Ascending aorta (tissue), 2 donors: ENCODE measurements at regions of chr6 and their contacts with region 1.

Region 1: DNA sequence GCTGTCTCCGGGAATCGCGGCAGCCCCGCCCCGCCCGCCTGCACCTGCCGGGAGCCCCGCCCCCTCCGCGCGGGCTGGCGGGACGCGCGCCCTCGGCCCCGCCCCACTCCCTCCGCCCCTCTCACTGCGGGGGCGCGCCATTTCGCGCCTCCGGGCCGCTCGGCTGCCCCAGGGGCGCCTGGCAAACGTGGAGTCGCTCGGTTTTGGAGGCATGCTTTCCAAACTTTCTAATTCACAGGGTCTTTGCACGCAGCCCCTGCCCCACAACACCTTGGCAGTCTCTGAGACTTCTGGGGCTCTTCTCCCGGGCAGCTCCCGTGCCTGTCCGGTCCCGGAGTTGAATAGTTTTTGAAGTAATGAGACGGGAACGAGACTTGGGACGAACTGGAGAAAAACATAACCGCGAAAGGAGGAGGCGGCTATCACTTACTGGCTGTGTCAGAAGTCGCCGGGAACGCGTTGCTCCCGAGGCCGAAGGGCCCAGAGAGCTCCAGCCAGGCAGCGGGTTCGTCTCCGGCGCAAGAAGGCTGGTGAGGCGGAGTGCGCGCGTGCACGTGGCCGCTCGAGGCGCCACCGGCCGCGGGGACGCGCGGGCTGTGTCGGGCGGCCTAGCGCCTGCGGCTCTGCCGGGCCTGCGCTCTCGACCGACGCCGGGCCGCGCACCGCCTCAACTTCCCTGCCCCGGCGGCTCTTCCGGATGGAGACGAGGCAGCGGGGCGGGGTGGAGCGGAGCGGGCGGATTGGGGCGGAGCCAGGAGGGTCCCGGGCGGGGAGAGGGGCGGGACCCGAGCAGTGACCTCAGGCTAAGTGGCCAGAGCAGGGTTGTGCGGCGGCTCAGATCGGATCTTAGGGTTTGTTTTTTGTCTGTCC is at the start of gene MCM9:
- DNase-seq: peak; percentile 42 to 94
- H3K4me3 ChIP-seq: peak within 1 kb of the TSS; percentile 75 to 97
- H3K27ac ChIP-seq: peak within 1 kb of the TSS; percentile 88 to 95
- H3K4me1 ChIP-seq: peaks cover 0 to 3% of the 10 kb centered on the region in 2 donors
- H3K27me3 ChIP-seq: no peaks in the 10 kb centered on the region
- CTCF ChIP-seq: no peak
- total RNA-seq, gene MCM9: 5.5 TPM

Region 2: GRCh38 chr6:119078376-119079282 is 143.9 kb after region 1 on chr6 and contains the start of gene FAM184A:
- intact Hi-C with region 1: loop called (anchors 2 kb)
- DNase-seq: peak in 1 of 2 donors; percentile 80
- H3K4me3 ChIP-seq: peak within 1 kb of the TSS; percentile 82 to 90
- H3K27ac ChIP-seq: peak within 1 kb of the TSS; percentile 59 to 66
- H3K4me1 ChIP-seq: no peaks in the 10 kb centered on the region
- H3K27me3 ChIP-seq: no peaks in the 10 kb centered on the region
- CTCF ChIP-seq: peak in 2 of 3 experiments; percentile 8 to 14
- total RNA-seq, gene FAM184A: 3.1 TPM